ENCODE measurements at regions of chr3 and their contacts with region 1.

Region 1: DNA sequence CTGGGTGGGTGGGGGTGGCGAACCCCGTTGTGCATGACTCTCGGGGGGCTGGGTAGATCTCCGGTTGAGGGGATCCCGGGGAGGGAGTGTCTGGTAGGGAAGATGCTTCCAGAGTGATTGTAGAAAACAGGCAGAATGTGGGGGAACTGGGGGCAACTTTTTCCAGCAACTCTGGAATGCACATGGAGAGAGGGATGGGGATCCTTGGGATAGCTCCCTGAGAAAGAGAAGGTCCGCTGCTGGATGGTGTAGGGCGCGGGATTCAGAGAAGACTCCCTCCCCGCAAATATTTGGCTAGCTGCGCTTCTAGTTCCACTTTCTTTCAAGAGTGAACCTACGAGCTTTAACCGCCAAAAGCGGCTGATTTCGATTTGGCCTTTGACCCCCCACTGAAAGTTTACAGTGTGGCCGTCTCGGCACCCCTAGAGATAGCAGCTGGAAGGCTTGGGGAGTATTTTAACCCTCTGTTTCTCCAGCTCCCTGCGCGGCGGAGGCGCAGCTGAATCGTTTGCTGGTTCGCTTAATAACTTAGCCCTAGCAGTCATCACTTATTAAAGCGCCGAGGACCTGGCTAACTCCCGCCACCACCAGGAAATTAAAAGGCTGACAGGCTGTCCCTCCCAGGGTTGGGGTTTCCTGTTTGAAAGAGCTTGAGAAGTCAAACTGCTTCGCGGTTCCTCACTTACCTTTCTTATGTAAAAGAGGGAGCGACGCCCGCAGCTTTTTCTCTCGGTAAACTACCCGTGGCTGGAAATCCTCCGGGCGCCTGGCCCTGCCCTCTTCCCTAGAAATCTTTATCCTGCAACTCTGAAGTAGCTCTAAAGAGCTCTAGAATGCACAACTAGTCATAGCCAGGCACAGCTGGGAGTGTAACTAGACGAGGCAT is 1.2 kb downstream of the PHLDB2 start:
- DNase-seq: peak; percentile 61 to 69 (median 64)
- ATAC-seq: peak; percentile 76
- H3K4me3 ChIP-seq: peak overlapping the region; percentile 25
- H3K4me1 ChIP-seq: peaks cover 13% of the 10 kb centered on the region
- CTCF ChIP-seq: no peak

Region 2: DNA sequence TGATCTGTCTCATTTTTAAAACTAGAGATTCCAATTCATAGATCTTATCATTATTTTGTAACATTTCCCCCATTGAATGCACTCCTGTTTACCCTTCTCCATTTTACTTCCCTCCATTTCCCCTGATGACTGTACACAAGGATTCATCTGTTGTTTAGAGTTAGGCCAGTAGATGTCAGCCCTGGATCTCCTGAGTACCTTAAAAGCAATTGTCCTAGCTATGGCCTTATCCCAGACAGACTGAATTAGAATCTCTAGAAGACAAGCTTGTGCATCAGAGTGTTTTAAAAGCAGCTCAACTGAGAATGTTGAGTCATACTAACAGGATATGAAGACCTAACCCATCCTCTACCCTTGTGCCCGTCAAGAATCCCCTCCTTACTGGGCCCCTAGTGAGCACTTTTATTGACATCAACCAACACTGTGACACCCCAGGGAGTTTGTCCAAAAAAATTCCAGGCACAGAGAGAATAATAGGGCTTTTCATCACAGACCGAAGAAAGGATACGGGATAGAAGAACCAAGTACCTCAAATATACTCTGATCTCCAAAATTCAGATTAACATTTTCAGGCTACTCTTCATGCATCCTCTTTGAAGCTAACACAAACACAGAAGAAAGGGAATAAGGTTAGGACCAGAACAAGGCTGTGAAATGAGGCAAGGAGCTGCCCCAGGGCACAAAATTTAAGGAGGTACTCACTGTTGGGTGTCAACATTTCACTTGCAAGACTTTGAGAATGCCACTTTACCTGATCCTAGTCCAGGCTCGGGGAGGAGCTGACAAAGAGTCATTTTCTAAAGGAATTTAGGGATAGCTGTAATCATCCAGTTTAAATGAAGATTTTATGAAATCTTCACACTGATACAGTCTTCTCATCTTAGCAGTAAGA is 282.2 kb before region 1 on chr3:
- intact Hi-C with region 1: no loop called
- DNase-seq: peak in 1 of 3 donors; percentile 15
- ATAC-seq: peak; percentile 59
- H3K4me3 ChIP-seq: no peak overlapping the region
- H3K4me1 ChIP-seq: no peaks in the 10 kb centered on the region
- CTCF ChIP-seq: no peak

Region 3: DNA sequence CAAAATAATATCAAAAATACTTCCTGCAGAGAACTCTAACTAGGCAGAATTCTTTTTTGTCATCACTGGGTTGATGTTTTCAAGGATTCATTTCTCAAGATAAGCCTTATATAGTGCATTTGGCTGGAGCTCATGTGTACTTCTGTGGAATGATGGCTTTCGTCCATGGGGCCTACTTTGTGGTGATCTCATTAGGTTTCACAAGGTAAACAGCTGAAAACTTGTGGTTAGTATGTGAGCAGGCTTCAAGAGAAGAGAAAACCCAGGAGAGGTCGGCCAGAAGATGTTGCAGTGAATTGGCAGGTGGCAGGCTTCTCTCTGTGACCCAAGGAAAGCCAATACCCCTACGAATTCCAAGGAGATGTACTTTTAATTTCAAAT is 122.5 kb before region 1 on chr3:
- intact Hi-C with region 1: loop called (anchors 10 kb)
- DNase-seq: peak in 1 of 3 donors; percentile 20
- ATAC-seq: peak; percentile 21
- H3K4me3 ChIP-seq: no peak overlapping the region
- H3K4me1 ChIP-seq: peaks cover 8% of the 10 kb centered on the region
- CTCF ChIP-seq: no peak

Region 4: GRCh38 chr3:111761309-111761831 is 98.8 kb before region 1 on chr3:
- intact Hi-C with region 1: loop called in 1 of 2 experiments (anchors 10 kb)
- DNase-seq: no peak
- ATAC-seq: peak; percentile 38
- H3K4me3 ChIP-seq: no peak overlapping the region
- H3K4me1 ChIP-seq: no peaks in the 10 kb centered on the region
- CTCF ChIP-seq: no peak

Region 5: DNA sequence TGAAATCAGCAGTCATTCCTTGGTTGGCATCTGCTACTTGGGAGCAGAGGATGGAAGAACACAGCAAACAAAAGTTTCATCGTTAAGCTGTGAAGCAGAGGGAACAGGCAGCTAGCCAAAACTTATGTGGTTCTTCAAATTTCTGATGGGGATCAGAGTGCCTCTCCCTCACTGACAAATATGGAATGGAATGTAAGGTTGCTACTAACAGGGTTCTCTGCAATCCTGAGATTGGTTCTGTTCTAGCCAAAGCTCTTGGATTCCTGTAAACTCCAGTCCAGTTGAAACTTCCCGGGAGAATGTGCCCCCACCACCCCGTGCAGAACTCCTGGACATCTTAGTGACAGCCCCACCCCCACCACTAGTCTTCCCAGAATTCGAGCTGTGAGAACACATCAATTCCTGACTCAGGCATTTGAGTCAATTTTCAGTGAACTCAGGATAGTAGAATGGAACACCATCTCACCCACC is 57.1 kb before region 1 on chr3:
- intact Hi-C with region 1: loop called in 1 of 2 experiments (anchors 5 kb)
- DNase-seq: peak; percentile 35 to 59 (median 39)
- ATAC-seq: peak; percentile 63
- H3K4me3 ChIP-seq: no peak overlapping the region
- H3K4me1 ChIP-seq: no peaks in the 10 kb centered on the region
- CTCF ChIP-seq: no peak

Region 6: DNA sequence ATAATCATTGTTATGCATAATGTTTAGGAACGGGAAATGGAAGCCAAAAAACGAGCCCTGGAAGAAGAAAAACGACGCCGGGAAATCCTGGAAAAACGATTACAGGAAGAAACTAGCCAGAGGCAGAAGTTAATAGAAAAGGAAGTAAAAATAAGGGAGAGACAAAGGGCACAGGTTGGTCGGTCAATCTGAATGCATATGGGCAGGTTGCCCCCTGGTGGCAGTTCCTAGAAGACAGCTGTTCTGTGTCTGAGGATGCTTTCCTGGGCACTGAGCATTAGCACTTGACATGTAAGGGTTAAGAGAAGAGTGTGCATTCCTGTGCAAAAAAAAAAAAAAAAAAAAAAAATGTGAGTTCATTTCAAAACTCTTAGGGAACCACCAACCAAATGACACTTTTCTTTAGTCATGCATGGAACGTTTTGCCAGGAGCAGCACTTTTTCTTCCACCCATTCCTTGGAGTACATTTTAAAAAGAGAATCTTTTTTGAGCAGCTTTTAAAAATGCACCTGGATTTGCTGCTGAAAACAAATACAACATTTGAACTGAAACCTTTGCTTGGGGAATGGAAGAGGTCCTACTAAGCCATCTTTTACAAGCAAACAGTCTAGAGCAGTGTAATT is 107.5 kb after region 1 on chr3:
- intact Hi-C with region 1: loop called in 1 of 2 experiments (anchors 10 kb)
- DNase-seq: peak; percentile 64 to 98 (median 77)
- ATAC-seq: peak; percentile 99
- H3K4me3 ChIP-seq: no peak overlapping the region
- H3K4me1 ChIP-seq: peaks cover 3% of the 10 kb centered on the region
- CTCF ChIP-seq: peak; percentile 69

Measured in mucosa of descending colon (tissue), 3 donors.